MCF 10A (cell line): ENCODE measurements at regions of chr16 and their contacts with region 1.

Region 1: GRCh38 chr16:58755989-58756649 is 22.0 kb upstream of the GOT2 start:
- DNase-seq: peak; percentile 68
- H3K4me3 Mint-ChIP-seq: no peak overlapping the region
- H3K27ac Mint-ChIP-seq: no peak overlapping the region
- H3K4me1 Mint-ChIP-seq: no peaks in the 10 kb centered on the region
- H3K27me3 Mint-ChIP-seq: no peaks in the 10 kb centered on the region
- CTCF ChIP-seq: peak; percentile 54

Region 2: GRCh38 chr16:58678716-58679115 is 77.4 kb before region 1 on chr16:
- CTCF ChIA-PET with region 1: interaction called, 36 read pairs
- POLR2A ChIA-PET with region 1: interaction called, 6 read pairs
- intact Hi-C with region 1: no loop called
- DNase-seq: peak; percentile 59
- H3K4me3 Mint-ChIP-seq: no peak overlapping the region
- H3K27ac Mint-ChIP-seq: no peak overlapping the region
- H3K4me1 Mint-ChIP-seq: peaks cover 12% of the 10 kb centered on the region
- H3K27me3 Mint-ChIP-seq: no peaks in the 10 kb centered on the region
- CTCF ChIP-seq: peak; percentile 41

Region 3: GRCh38 chr16:58717994-58718393 is 38.1 kb before region 1 on chr16:
- CTCF ChIA-PET with region 1: interaction called, 10 read pairs
- POLR2A ChIA-PET with region 1: no interaction called
- intact Hi-C with region 1: no loop called
- DNase-seq: no peak
- H3K4me3 Mint-ChIP-seq: no peak overlapping the region
- H3K27ac Mint-ChIP-seq: no peak overlapping the region
- H3K4me1 Mint-ChIP-seq: no peaks in the 10 kb centered on the region
- H3K27me3 Mint-ChIP-seq: no peaks in the 10 kb centered on the region
- CTCF ChIP-seq: no peak

Region 4: GRCh38 chr16:58843675-58844074 is 87.6 kb after region 1 on chr16:
- CTCF ChIA-PET with region 1: no interaction called
- POLR2A ChIA-PET with region 1: no interaction called
- intact Hi-C with region 1: no loop called
- DNase-seq: peak; percentile 9
- H3K4me3 Mint-ChIP-seq: no peak overlapping the region
- H3K27ac Mint-ChIP-seq: no peak overlapping the region
- H3K4me1 Mint-ChIP-seq: no peaks in the 10 kb centered on the region
- H3K27me3 Mint-ChIP-seq: no peaks in the 10 kb centered on the region
- CTCF ChIP-seq: peak; percentile 56